ENCODE measurements at regions of chr14 and their contacts with region 1.

Region 1: GRCh38 chr14:30988509-30988908 is 36.9 kb upstream of the AP4S1 start:
- DNase-seq: no peak
- ATAC-seq: no peak

Region 2: GRCh38 chr14:30779196-30779595 is 209.3 kb before region 1 on chr14:
- intact Hi-C with region 1: no loop called
- DNase-seq: no peak
- ATAC-seq: no peak

Region 3: GRCh38 chr14:31026395-31027118 is 38.0 kb after region 1 on chr14:
- intact Hi-C with region 1: loop called (anchors 5 kb)
- DNase-seq: peak; percentile 98
- ATAC-seq: peak; percentile 99

Region 4: GRCh38 chr14:31340297-31341063 is 352.0 kb after region 1 on chr14:
- intact Hi-C with region 1: loop called (anchors 10 kb)
- DNase-seq: no peak
- ATAC-seq: no peak

Measured in Right ventricle myocardium inferior (tissue), 1 donor.